Activated T-helper 2 cell treated with anti-CD3 and anti-CD28 coated beads, Interferon-gamma antibody, Interleukin-2, Interleukin-4, amounts not matched to agents 10 μg/mL and 5 μg/mL and 100 μg/mL, durations not matched to agents 14 hours and 24 hours and 36 hours (primary cell): ENCODE measurements at regions of chr17 and their contacts with region 1.

Region 1: GRCh38 chr17:7351665-7352501 is at the start of gene KCTD11:
- DNase-seq: peak; percentile 74
- H3K4me3 Mint-ChIP-seq: peak within 1 kb of the TSS; percentile 90
- H3K27ac Mint-ChIP-seq: peak within 1 kb of the TSS; percentile 87
- H3K4me1 Mint-ChIP-seq: peaks cover 32% of the 10 kb centered on the region
- H3K27me3 Mint-ChIP-seq: no peaks in the 10 kb centered on the region
- total RNA-seq, gene KCTD11: 8.0 and 8.5 TPM in 2 replicates

Region 2: GRCh38 chr17:7242717-7243576 is 108.9 kb before region 1 on chr17:
- intact Hi-C with region 1: no loop called
- DNase-seq: peak; percentile 92
- H3K4me3 Mint-ChIP-seq: peak overlapping the region; percentile 98
- H3K27ac Mint-ChIP-seq: peak overlapping the region; percentile 95
- H3K4me1 Mint-ChIP-seq: peaks cover 29% of the 10 kb centered on the region
- H3K27me3 Mint-ChIP-seq: no peaks in the 10 kb centered on the region

Region 3: DNA sequence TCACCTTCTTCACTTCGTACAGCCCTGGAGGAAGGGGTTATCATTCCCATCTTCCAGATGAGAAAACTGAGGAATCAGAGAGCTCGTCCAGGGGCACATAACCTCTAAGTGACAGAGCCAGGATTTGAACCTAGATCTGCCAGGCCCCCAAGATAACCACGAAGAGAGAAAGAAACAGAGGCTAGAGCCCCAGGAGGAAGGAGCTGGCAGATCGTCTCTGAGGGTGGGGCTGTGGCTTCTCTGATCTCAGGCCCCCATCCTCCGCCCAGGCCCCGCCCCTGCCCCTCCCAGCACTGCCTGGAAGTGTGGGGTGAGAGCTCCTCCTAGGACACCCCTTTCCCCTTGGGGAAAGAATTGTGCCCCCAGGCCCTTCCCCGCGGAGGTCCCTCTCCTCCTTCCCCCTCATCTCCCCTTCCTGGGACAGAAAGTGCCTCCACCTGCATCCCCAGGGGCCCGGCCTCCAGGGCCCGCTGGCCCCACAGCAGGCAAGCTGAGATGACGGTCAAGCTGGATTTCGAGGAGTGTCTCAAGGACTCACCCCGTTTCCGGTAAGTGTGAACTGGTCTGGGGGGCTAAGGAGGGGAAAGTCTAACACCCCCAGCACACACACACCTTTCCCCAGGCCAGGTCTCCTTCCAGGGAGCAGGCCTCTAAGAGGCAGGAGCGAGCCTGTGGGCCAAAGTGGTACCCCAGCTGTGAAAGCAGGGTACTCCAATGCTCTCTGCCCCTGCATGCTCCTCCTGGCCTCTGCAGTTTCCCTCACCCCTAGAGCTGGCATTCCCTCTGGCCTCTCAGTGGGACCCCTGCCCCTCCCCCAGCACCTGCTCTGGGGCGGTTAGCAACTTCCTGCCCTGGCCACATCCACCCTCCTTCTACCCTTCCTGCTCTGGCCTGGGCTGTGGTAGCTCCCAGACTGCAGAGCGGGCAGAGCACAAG is 15.4 kb before region 1 on chr17 and contains the start of gene ACAP1:
- intact Hi-C with region 1: loop called (anchors 2 kb)
- DNase-seq: peak; percentile 80
- H3K4me3 Mint-ChIP-seq: peak within 1 kb of the TSS; percentile 92
- H3K27ac Mint-ChIP-seq: peak within 1 kb of the TSS; percentile 89
- H3K4me1 Mint-ChIP-seq: peaks cover 41% of the 10 kb centered on the region
- H3K27me3 Mint-ChIP-seq: no peaks in the 10 kb centered on the region
- total RNA-seq, gene ACAP1: 361 and 382 TPM in 2 replicates

Region 4: GRCh38 chr17:7394452-7395191 is 42.7 kb after region 1 on chr17 and contains the start of gene PLSCR3:
- intact Hi-C with region 1: loop called (anchors 5 kb)
- DNase-seq: peak; percentile 80
- H3K4me3 Mint-ChIP-seq: peak within 1 kb of the TSS; percentile 94
- H3K27ac Mint-ChIP-seq: peak within 1 kb of the TSS; percentile 91
- H3K4me1 Mint-ChIP-seq: peaks cover 15% of the 10 kb centered on the region
- H3K27me3 Mint-ChIP-seq: no peaks in the 10 kb centered on the region
- total RNA-seq, gene PLSCR3: 75.4 and 76.2 TPM in 2 replicates